H1 (cell line): ENCODE measurements at regions of chr4 and their contacts with region 1.

Region 1: DNA sequence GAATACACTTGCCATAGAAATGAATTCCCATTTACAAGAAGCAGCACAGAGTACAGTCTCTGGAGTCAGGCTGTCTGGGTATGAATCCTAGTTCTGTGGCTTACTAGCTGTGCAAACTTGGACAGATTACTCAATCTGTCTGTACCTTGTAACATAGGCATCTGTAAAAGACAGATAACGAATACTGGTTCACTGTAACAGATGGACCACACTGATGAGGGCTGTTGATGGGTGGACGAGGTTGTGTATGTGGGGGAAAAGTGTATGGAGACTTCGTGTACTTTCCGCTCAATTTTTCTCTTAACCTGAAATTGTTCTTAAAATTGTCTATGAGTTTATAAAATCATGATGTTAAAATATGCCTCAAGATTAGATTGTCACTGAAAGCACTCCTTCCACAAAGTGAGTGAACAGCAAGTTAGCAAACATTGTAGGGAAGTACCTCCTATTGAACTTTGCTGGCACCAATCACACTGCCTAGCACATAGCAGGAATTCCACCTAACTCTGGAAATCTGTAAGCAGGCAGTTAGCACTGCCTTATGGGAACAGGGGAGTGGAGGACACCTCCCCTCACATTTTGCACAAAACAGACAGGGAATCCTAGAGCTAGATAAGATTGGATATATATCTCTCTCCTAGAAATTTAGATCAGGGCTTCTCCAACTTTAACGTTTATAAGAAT is 6.5 kb upstream of the EXOSC9 start:
- DNase-seq: no peak
- H3K4me3 ChIP-seq: no peak overlapping the region
- H3K27ac ChIP-seq: no peak overlapping the region
- H3K4me1 ChIP-seq: peaks cover 8 to 18% (median 13%) of the 10 kb centered on the region in 4 experiments
- H3K27me3 ChIP-seq: peaks cover 0 to 1% (median 0%) of the 10 kb centered on the region in 4 experiments; a peak in 1 of 7 replicates
- CTCF ChIP-seq: no peak
- EP300 ChIP-seq: no peak
- POLR2A ChIP-seq: no peak
- RAD21 ChIP-seq: no peak

Region 2: GRCh38 chr4:121764707-121765593 is 29.7 kb before region 1 on chr4 and contains the start of gene SMIM43:
- CTCF ChIA-PET with region 1: interaction called, 3 read pairs
- POLR2A ChIA-PET with region 1: interaction called, 13 read pairs
- DNase-seq: peak in 1 of 2 experiments; percentile 76
- H3K4me3 ChIP-seq: peak within 1 kb of the TSS; percentile 47 to 76 (median 64)
- H3K27ac ChIP-seq: no peak within 1 kb of the TSS
- H3K4me1 ChIP-seq: peaks cover 0 to 11% (median 7%) of the 10 kb centered on the region in 4 experiments; a peak in 3 of 7 replicates
- H3K27me3 ChIP-seq: peaks cover 17 to 53% (median 38%) of the 10 kb centered on the region in 4 experiments
- CTCF ChIP-seq: no peak
- EP300 ChIP-seq: no peak
- POLR2A ChIP-seq: no peak
- RAD21 ChIP-seq: no peak
- total RNA-seq, gene SMIM43: 0.50 TPM in 1 of 2 replicates, not detected in the other

Region 3: GRCh38 chr4:121811122-121811521 is 16.5 kb after region 1 on chr4:
- CTCF ChIA-PET with region 1: interaction called, 3 read pairs
- POLR2A ChIA-PET with region 1: interaction called, 246 read pairs
- DNase-seq: no peak
- H3K4me3 ChIP-seq: no peak overlapping the region
- H3K27ac ChIP-seq: no peak overlapping the region
- H3K4me1 ChIP-seq: no peaks in the 10 kb centered on the region
- H3K27me3 ChIP-seq: no peaks in the 10 kb centered on the region
- CTCF ChIP-seq: no peak
- EP300 ChIP-seq: no peak
- POLR2A ChIP-seq: no peak; a peak in 1 of 3 replicates
- RAD21 ChIP-seq: no peak